ENCODE measurements at regions of chr6 and their contacts with region 1.

Region 1: GRCh38 chr6:96907498-96907897 is 9.8 kb upstream of the NDUFAF4 start:
- DNase-seq: peak; percentile 75
- H3K4me3 Mint-ChIP-seq: no peak overlapping the region
- H3K27ac Mint-ChIP-seq: peak overlapping the region; percentile 21
- H3K4me1 Mint-ChIP-seq: peaks cover 26% of the 10 kb centered on the region
- H3K27me3 Mint-ChIP-seq: peaks cover 34% of the 10 kb centered on the region

Region 2: GRCh38 chr6:96468681-96469224 is 438.7 kb before region 1 on chr6:
- CTCF ChIA-PET with region 1: no interaction called
- POLR2A ChIA-PET with region 1: no interaction called
- intact Hi-C with region 1: loop called (anchors 5 kb)
- DNase-seq: no peak
- H3K4me3 Mint-ChIP-seq: no peak overlapping the region
- H3K27ac Mint-ChIP-seq: no peak overlapping the region
- H3K4me1 Mint-ChIP-seq: peaks cover 20% of the 10 kb centered on the region
- H3K27me3 Mint-ChIP-seq: peaks cover 2% of the 10 kb centered on the region

Region 3: DNA sequence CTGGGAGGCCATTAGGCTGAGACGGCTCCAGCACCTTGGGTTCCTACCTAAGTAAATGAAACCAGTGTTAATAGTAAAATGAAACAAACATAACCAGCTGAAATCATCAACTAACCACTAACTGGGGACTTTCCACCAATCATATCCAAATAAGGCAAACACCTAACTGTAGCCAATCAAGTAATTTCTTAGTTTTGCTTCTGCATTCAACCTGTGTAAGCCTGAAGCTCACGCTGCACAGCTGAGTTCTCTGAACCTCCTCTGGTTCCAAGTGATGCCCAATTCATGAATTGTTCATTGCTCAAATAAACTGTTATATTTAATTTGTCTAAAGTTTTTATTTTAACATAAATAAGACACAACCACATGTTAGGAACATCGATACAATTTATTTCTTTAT is 39.6 kb after region 1 on chr6:
- CTCF ChIA-PET with region 1: interaction called, 5 read pairs
- POLR2A ChIA-PET with region 1: no interaction called
- intact Hi-C with region 1: loop called (anchors 1 kb)
- DNase-seq: peak; percentile 15
- H3K4me3 Mint-ChIP-seq: no peak overlapping the region
- H3K27ac Mint-ChIP-seq: no peak overlapping the region
- H3K4me1 Mint-ChIP-seq: peaks cover 7% of the 10 kb centered on the region
- H3K27me3 Mint-ChIP-seq: no peaks in the 10 kb centered on the region

Region 4: DNA sequence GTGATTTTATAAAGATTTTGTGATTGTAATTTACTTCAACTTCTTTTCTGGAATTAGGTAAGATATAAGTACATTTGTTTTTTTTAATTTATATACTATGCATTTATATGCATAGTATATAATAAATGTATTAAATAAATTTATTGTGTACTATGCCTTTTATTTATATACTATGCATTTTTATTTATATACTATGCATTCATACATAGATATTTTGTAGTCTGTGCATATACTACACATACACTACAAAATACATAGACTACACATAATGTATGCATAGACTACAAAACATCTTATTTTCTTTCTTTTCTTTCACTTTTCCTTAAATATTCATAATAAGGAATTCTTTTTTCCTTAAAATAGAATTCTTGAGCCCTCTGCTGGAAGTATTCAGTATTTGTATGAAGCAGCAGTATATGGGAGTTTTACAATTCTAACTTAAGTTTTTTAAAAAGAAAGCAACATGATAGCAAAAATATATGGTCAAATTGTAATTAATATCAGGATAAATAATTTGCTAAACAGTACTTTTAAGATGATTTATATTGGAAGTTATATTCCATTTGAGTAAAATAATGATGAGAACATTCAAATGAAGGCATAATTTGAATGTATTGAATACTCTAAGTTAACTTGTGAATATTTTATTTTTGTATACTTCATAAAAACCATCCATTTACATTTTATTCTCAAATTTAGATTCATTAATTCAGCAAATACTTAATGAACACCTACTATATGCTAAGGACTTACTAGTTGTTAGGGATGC is 146.3 kb after region 1 on chr6:
- CTCF ChIA-PET with region 1: interaction called, 3 read pairs
- POLR2A ChIA-PET with region 1: no interaction called
- intact Hi-C with region 1: loop called (anchors 1 kb)
- DNase-seq: no peak
- H3K4me3 Mint-ChIP-seq: no peak overlapping the region
- H3K27ac Mint-ChIP-seq: no peak overlapping the region
- H3K4me1 Mint-ChIP-seq: peaks cover 15% of the 10 kb centered on the region
- H3K27me3 Mint-ChIP-seq: no peaks in the 10 kb centered on the region

Region 5: DNA sequence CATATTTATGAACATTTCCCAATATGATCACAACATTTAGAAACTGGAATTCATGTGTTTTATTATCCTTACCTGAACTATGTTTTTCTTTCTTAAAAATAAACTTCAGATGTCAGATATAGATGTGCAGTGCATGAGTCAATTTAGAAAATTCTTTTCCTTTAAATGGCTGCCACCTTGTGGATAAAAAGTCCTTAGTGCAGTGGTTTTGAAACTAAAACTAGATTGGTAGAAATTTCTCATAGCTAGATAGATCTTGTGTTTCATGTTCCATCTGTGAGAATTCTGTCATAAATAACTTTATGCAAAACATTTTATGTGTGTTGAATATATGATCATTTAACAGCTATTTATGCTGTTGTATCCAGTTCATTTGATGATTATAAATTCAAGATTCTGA is 152.0 kb after region 1 on chr6:
- CTCF ChIA-PET with region 1: interaction called, 11 read pairs
- POLR2A ChIA-PET with region 1: no interaction called
- intact Hi-C with region 1: loop called (anchors 2 kb)
- DNase-seq: no peak
- H3K4me3 Mint-ChIP-seq: no peak overlapping the region
- H3K27ac Mint-ChIP-seq: no peak overlapping the region
- H3K4me1 Mint-ChIP-seq: no peaks in the 10 kb centered on the region
- H3K27me3 Mint-ChIP-seq: no peaks in the 10 kb centered on the region

Region 6: DNA sequence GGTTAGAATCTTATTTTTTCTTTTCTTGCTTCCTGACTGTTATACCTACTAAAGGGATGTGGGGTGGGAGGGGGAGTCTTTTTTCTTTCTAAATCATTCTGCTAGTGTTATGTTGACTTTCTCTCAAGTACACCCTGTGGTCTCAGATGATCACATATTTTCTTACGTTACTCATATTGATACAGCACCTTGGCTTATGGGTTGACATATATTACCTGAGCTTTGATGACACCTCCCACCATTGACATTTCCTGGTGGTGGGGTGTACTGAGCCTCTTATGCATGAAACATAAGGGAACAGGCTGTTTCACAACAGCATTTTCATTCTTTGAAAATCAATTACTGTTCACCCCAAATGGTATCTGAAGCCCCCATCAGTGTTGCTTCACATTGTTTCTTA is 205.7 kb after region 1 on chr6:
- CTCF ChIA-PET with region 1: no interaction called
- POLR2A ChIA-PET with region 1: no interaction called
- intact Hi-C with region 1: loop called (anchors 1 kb)
- DNase-seq: peak; percentile 30
- H3K4me3 Mint-ChIP-seq: no peak overlapping the region
- H3K27ac Mint-ChIP-seq: no peak overlapping the region
- H3K4me1 Mint-ChIP-seq: peaks cover 12% of the 10 kb centered on the region
- H3K27me3 Mint-ChIP-seq: no peaks in the 10 kb centered on the region

Region 7: DNA sequence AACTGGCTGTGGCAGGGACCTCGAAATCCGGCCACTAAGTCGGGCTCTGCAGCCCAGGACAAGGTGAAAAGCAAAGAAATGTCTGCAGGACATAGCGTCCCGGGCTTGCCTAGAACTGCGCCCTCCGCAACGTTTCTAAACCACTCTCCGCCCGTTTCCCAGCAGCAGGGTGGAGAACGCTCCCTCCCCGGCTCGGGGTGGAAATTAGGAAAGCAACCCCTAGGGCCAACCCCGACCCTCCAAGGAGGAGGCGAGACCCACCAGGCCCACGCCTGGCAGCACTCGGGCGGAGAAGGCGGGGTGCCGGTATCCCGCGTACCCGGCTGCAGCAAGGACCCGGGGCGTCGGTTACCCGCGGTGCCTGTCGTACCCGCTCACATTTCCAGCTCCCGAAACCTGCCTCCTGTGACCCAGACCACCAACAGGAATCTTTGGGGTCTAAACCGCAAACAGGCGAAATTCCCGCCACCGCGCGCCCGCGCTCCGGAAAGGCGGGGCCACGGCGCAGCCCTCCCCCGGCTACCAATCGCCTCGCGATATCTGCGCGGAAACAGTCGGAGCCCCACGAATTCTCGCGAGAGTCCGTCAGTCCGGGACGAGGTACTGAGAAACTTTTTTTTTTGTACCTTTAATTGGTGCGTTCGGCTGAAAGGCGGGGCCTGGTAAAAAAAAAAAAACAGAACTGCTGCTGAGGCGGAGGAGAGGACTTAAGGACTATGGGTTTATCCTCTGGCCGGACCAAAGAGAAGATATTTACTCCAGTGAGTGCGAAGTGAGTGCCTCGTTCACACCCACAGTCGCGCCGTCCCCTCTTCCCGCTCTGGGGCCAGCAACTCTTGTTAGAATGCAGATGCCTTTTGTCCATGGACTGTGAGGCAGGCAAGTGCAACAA is 375.5 kb after region 1 on chr6 and contains the start of gene MMS22L:
- CTCF ChIA-PET with region 1: no interaction called
- POLR2A ChIA-PET with region 1: no interaction called
- intact Hi-C with region 1: loop called (anchors 5 kb)
- DNase-seq: peak; percentile 95
- H3K4me3 Mint-ChIP-seq: peak within 1 kb of the TSS; percentile 91
- H3K27ac Mint-ChIP-seq: peak within 1 kb of the TSS; percentile 69
- H3K4me1 Mint-ChIP-seq: peaks cover 24% of the 10 kb centered on the region
- H3K27me3 Mint-ChIP-seq: no peaks in the 10 kb centered on the region
- total RNA-seq, gene MMS22L: 38.5 to 43.3 TPM

Measured in activated CD4-positive, alpha-beta memory T cell treated with anti-CD3 and anti-CD28 coated beads for 36 hours (primary cell).